Natural killer cell (primary cell): ENCODE measurements at regions of chr9 and their contacts with region 1.

Region 1: GRCh38 chr9:136400038-136400834 is at the start of gene SNAPC4:
- DNase-seq: peak; percentile 88 to 95
- ATAC-seq: peak; percentile 91 to 94 (median 91)
- H3K4me3 ChIP-seq: peak within 1 kb of the TSS; percentile 46
- H3K4me3 Mint-ChIP-seq: peak within 1 kb of the TSS; percentile 84
- H3K27ac ChIP-seq: peak within 1 kb of the TSS; percentile 37
- H3K27ac Mint-ChIP-seq: peak within 1 kb of the TSS; percentile 57 to 72
- H3K4me1 ChIP-seq: peaks cover 54% of the 10 kb centered on the region
- H3K4me1 Mint-ChIP-seq: peaks cover 23 to 30% of the 10 kb centered on the region in 2 donors
- H3K27me3 ChIP-seq: no peaks in the 10 kb centered on the region
- H3K27me3 Mint-ChIP-seq: no peaks in the 10 kb centered on the region
- CTCF ChIP-seq: peak; percentile 93
- total RNA-seq, gene SNAPC4: 9.0 to 11.3 (median 9.4) TPM

Region 2: DNA sequence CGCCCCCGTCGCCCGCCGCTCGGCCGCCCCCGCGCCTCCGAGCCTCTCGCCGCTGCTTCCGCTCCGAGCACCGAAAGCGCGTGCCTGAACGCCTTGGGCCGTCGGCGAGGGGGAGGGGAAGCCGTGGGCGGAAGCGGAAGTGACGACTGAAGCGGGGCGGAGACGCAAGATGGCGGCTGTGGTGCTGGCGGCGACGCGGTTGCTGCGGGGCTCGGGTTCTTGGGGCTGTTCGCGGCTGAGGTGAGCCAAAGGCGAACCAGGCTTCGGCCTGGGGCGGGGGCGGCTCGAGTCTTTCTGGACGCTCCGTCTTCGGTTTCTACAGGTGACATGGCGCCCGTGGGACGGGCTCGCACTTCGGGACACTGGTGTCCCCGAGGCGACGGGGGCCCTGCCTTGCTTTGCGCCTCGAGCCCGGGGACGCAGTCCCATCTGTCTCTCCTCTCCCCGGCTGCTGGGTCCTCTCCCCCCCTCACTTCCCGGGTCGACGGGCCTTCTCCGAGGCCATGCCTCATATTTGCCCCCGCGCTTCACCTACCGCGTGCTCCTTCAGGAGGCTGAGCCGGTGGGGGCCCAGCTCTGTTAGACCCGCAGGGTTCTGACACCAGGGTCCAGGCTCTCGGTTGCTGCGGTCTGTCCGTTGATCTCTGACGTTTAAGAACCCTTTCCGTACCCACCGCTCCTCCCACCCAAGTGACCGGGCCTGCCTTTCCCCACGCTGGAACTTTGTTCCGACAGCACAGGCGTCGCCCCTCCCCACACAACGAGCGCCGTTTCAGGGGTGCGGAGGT is 10.5 kb after region 1 on chr9 and contains the starts of genes ENTR1 and PMPCA:
- intact Hi-C with region 1: loop called (anchors 1 kb)
- DNase-seq: peak; percentile 95 to 97
- ATAC-seq: peak; percentile 92 to 94 (median 93)
- H3K4me3 ChIP-seq: peak within 1 kb of the TSS; percentile 95
- H3K4me3 Mint-ChIP-seq: peak within 1 kb of the TSS; percentile 93
- H3K27ac ChIP-seq: peak within 1 kb of the TSS; percentile 90
- H3K27ac Mint-ChIP-seq: peak within 1 kb of the TSS; percentile 88 to 92
- H3K4me1 ChIP-seq: peaks cover 34% of the 10 kb centered on the region
- H3K4me1 Mint-ChIP-seq: peaks cover 20 to 38% of the 10 kb centered on the region in 2 donors
- H3K27me3 ChIP-seq: no peaks in the 10 kb centered on the region
- H3K27me3 Mint-ChIP-seq: no peaks in the 10 kb centered on the region
- CTCF ChIP-seq: no peak
- total RNA-seq, gene ENTR1: 38.7 to 62.3 (median 41.6) TPM
- total RNA-seq, gene PMPCA: 78.3 to 84.8 (median 79.3) TPM